ENCODE measurements at regions of chr3 and their contacts with region 1.

Region 1: GRCh38 chr3:59857589-59858346 is 807.9 kb upstream of the CFAP20DC start:
- DNase-seq: peak; percentile 76
- CTCF ChIP-seq: peak; percentile 92

Region 2: DNA sequence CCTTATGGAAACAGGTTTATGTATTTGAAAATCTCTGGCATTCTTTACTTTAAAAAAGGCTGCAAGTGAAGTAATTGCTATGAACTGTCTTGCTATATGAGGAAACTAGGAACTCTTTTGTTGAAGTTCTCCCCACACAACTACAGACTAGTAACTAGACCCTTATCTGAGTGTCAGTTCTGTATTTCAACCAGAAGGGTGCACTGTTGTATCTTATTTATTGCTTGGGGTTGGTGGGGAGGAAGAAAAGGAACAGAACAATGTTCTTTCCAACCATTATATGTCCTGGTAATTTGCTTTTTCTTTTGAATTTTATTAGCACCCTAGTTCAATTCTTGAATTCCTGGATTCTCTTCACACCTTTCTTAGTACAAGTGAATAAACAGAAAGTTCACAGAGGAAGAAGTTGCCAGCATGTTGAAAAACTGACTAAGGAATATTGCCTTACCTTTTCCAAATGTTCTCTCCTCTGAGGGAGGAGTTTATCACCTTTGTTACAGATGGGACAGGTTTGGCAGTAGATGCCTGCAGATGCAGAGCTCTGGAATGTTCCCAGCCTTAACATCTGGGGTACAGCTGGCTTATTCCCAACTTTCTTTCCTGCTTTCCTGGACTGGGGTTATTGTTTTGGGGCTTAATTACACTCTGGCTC is 645.5 kb before region 1 on chr3:
- CTCF ChIA-PET with region 1: interaction called, 15 read pairs
- POLR2A ChIA-PET with region 1: no interaction called
- DNase-seq: peak; percentile 41
- CTCF ChIP-seq: peak; percentile 60

Region 3: DNA sequence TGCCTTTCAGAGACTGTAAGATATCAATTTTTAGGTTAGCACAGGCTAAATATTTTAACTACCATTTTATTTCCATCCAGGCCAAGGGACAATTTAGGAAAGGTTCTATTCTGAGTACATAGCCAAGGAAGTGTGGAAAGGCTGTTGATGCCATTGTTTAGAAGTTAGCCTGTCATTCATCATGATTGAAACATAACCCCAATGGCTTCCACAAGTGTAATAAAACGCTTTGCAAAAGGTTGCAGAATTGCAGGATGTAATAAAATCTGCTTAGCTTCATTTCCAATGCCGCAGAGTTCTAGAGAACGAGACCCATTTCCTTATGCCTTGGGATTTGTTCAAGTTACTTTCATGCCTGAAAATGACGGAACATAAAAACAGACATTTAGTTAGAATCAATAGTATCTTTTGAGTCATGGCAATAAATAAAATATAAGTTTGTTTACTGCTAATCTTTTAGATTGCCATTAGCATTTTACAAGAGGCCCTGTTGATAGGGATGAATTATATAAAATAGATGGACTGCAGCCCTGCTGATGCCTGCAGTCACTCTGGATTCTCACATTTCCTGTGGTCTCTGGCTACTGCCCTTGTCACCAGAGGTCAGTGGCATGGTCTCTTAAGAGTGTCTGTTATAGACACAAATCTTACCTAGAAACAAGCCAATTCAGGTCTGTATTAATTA is 129.7 kb before region 1 on chr3:
- CTCF ChIA-PET with region 1: no interaction called
- POLR2A ChIA-PET with region 1: no interaction called
- DNase-seq: no peak
- CTCF ChIP-seq: no peak

Region 4: DNA sequence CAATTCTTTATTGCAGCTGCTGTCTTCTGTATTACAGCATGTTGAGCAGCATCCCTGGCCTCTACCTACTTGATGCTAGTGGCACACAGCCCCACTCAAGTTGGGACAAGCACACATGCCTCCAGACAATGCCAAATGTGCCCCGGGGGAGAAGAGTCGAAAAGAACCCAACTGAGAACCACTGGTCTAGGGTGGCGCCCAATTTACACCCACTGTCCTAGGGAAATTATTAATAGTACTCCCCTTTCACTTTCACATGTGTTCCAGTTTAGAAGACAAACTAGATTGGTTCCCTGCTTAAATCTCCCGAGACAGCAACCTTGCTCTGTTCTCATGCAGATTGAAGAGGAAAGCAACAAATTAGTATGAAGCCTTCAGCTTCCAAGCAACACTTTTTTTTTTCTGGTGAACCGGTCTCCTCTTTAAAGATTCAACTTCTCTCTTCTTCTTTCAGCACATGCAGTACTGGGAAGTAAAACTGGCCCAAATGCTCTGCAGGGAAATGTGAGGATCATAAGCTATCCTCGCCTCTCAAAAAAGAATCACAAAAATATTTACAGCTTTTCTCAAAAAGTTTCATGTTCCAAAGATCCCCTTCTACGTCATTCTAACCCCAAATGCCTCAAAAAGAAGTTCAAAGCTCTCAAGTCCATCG is 15.9 kb after region 1 on chr3:
- CTCF ChIA-PET with region 1: interaction called, 14 read pairs
- POLR2A ChIA-PET with region 1: no interaction called
- DNase-seq: peak; percentile 22
- CTCF ChIP-seq: no peak

Region 5: GRCh38 chr3:59894425-59895121 is 36.8 kb after region 1 on chr3:
- CTCF ChIA-PET with region 1: no interaction called
- POLR2A ChIA-PET with region 1: no interaction called
- DNase-seq: no peak
- CTCF ChIP-seq: no peak